Tibial artery (tissue), 4 donors: ENCODE measurements at regions of chr3 and their contacts with region 1.

Region 1: DNA sequence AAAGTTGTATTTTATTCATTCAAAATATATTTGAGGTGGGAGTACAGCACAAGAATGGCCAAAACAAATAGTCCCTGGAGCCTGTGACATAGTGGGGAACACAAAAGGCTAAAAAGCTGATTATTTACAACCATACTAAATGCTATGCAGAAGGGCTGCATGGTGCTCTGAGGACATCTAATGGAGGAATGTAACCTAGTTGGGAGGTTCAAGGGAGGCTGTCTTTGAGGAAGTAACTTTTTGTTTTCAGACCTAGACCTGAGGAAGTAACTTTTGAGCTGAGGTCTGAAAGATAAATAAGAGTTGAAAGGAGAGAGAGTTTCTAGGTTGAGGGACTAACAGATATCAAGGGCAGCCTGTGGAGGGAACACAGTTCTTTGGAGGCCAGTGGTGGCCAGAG is 34.8 kb upstream of the RASA2 start:
- DNase-seq: no peak
- H3K4me3 ChIP-seq: no peak overlapping the region
- H3K27ac ChIP-seq: peak overlapping the region; percentile 13 to 57
- H3K4me1 ChIP-seq: peaks cover 0 to 64% (median 11%) of the 10 kb centered on the region in 4 donors
- H3K27me3 ChIP-seq: no peaks in the 10 kb centered on the region
- CTCF ChIP-seq: peak; percentile 63 to 79

Region 2: GRCh38 chr3:141303481-141304223 is 148.4 kb before region 1 on chr3:
- intact Hi-C with region 1: loop called (anchors 2 kb)
- DNase-seq: no peak
- H3K4me3 ChIP-seq: no peak overlapping the region
- H3K27ac ChIP-seq: no peak overlapping the region
- H3K4me1 ChIP-seq: peaks cover 0 to 13% (median 5%) of the 10 kb centered on the region in 4 donors
- H3K27me3 ChIP-seq: no peaks in the 10 kb centered on the region
- CTCF ChIP-seq: peak; percentile 76 to 82

Region 3: DNA sequence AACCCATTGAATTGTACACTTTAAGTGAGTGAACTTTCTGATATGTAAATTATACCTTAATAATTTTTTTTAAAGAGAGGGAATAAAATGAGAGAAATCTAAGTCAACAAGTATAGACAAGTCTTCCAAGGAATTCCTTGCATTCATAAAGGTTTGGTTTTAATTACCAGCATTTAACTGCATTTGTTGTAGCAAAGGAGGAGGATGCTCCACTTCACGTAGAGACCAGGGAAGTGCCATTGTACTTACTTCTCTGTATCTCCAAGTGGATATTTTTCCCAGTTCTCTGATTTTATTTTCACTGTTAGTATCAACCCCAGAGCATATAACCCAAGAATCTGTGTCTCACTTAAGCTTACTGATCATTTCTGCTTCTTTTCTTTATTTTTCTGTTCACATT is 86.2 kb before region 1 on chr3:
- intact Hi-C with region 1: loop called (anchors 2 kb)
- DNase-seq: no peak
- H3K4me3 ChIP-seq: no peak overlapping the region
- H3K27ac ChIP-seq: peak overlapping the region; percentile 85 to 96
- H3K4me1 ChIP-seq: peaks cover 4 to 52% (median 43%) of the 10 kb centered on the region in 4 donors
- H3K27me3 ChIP-seq: no peaks in the 10 kb centered on the region
- CTCF ChIP-seq: no peak